ENCODE measurements at regions of chr2 and their contacts with region 1.

Region 1: GRCh38 chr2:226799181-226799975 is at the start of gene IRS1:
- DNase-seq: peak; percentile 74
- H3K4me3 Mint-ChIP-seq: peak within 1 kb of the TSS; percentile 80
- H3K27ac Mint-ChIP-seq: peak within 1 kb of the TSS; percentile 38
- H3K4me1 Mint-ChIP-seq: peaks cover 24% of the 10 kb centered on the region
- H3K27me3 Mint-ChIP-seq: peaks cover 13% of the 10 kb centered on the region
- total RNA-seq, gene IRS1: 2.0 to 2.1 TPM

Region 2: GRCh38 chr2:225668606-225669266 is 1130.6 kb before region 1 on chr2:
- CTCF ChIA-PET with region 1: interaction called, 11 read pairs
- POLR2A ChIA-PET with region 1: no interaction called
- intact Hi-C with region 1: loop called (anchors 1 kb)
- DNase-seq: no peak
- H3K4me3 Mint-ChIP-seq: no peak overlapping the region
- H3K27ac Mint-ChIP-seq: no peak overlapping the region
- H3K4me1 Mint-ChIP-seq: no peaks in the 10 kb centered on the region
- H3K27me3 Mint-ChIP-seq: peaks cover 2% of the 10 kb centered on the region

Region 3: GRCh38 chr2:226215902-226216503 is 583.4 kb before region 1 on chr2:
- CTCF ChIA-PET with region 1: interaction called, 53 read pairs
- POLR2A ChIA-PET with region 1: no interaction called
- intact Hi-C with region 1: loop called (anchors 1 kb)
- DNase-seq: peak; percentile 71
- H3K4me3 Mint-ChIP-seq: no peak overlapping the region
- H3K27ac Mint-ChIP-seq: no peak overlapping the region
- H3K4me1 Mint-ChIP-seq: no peaks in the 10 kb centered on the region
- H3K27me3 Mint-ChIP-seq: no peaks in the 10 kb centered on the region

Region 4: DNA sequence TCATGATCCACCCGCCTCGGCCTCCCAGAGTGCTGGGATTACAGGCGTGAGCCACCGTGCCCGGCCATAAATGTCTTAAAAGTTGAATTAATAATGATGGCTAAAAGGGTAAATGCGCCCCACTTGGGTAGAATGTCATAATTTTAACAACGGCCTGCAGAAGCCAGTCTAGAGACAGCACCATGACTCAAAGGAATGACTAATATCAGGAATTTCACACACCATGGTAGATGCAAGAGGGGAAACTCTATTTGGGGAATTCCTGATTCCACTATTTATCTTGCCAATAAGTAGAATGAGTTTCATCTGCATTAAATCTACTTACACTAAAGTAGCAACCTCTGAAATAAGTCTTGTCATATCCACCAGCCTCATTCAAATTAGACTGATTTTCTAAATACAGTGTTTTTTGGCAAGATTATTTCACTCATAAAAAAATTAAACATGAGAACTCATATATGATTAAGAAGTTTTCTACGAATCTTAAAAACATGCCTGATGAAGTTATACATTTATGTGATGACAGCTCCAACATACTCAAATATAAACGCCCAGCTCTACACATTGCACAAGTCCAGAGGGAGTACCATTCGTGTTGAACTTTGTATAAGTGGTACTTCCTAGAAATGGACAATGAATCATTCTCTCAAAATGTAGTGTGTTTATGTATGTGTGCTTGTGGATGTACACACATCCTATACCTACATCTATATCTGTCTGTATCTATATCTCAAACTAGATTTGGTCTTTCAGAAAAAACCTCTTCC is 309.4 kb before region 1 on chr2:
- CTCF ChIA-PET with region 1: no interaction called
- POLR2A ChIA-PET with region 1: no interaction called
- intact Hi-C with region 1: loop called (anchors 10 kb)
- DNase-seq: no peak
- H3K4me3 Mint-ChIP-seq: no peak overlapping the region
- H3K27ac Mint-ChIP-seq: no peak overlapping the region
- H3K4me1 Mint-ChIP-seq: peaks cover 8% of the 10 kb centered on the region
- H3K27me3 Mint-ChIP-seq: peaks cover 9% of the 10 kb centered on the region

Region 5: GRCh38 chr2:226649871-226650660 is 149.3 kb before region 1 on chr2:
- CTCF ChIA-PET with region 1: no interaction called
- POLR2A ChIA-PET with region 1: no interaction called
- intact Hi-C with region 1: no loop called
- DNase-seq: peak; percentile 66
- H3K4me3 Mint-ChIP-seq: no peak overlapping the region
- H3K27ac Mint-ChIP-seq: peak overlapping the region; percentile 39
- H3K4me1 Mint-ChIP-seq: peaks cover 29% of the 10 kb centered on the region
- H3K27me3 Mint-ChIP-seq: no peaks in the 10 kb centered on the region

Region 6: GRCh38 chr2:226813148-226813701 is 13.8 kb after region 1 on chr2:
- CTCF ChIA-PET with region 1: interaction called, 16 read pairs
- POLR2A ChIA-PET with region 1: no interaction called
- intact Hi-C with region 1: no loop called
- DNase-seq: no peak
- H3K4me3 Mint-ChIP-seq: no peak overlapping the region
- H3K27ac Mint-ChIP-seq: no peak overlapping the region
- H3K4me1 Mint-ChIP-seq: no peaks in the 10 kb centered on the region
- H3K27me3 Mint-ChIP-seq: peaks cover 17% of the 10 kb centered on the region

Region 7: DNA sequence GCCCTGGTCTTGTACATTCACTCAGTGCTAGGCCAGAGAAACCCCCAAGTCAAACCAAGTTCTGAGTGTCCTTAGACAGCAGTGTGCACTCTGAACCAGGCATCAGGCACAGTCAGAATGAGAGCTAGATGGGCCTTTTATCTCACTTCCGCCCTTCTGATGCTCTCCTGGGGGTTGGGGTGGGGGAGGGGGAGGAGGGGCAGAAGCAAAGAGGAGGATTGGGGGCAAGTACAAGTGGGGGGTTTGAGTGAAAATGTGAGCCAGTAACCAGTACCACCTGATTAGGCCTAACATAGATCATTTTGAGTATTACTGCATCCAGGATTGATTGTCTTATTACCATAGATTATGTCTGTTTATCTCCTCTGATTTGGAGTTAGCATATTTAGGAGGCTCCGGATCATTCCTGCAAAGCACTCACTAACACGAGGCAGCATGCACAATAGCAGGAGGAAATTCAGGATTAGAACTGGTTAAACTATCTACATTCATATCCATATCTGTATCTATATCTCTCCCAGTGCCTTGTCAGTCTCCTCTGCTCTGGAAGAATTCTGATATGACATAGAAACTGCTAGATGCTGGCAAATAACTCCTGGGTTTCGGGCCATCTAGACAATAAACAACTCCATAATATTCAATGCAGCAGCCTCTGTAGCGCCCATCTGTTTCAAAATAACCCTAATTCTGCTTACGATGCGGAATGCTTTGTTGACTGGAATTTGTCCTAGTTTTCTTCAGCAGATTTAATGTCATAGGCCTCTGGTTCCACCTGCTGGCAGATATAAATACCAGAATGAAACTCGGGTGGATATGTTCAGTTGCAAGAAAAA is 185.6 kb after region 1 on chr2:
- CTCF ChIA-PET with region 1: interaction called, 29 read pairs
- POLR2A ChIA-PET with region 1: no interaction called
- intact Hi-C with region 1: loop called (anchors 2 kb)
- DNase-seq: peak; percentile 31
- H3K4me3 Mint-ChIP-seq: no peak overlapping the region
- H3K27ac Mint-ChIP-seq: no peak overlapping the region
- H3K4me1 Mint-ChIP-seq: peaks cover 20% of the 10 kb centered on the region
- H3K27me3 Mint-ChIP-seq: no peaks in the 10 kb centered on the region

Region 8: DNA sequence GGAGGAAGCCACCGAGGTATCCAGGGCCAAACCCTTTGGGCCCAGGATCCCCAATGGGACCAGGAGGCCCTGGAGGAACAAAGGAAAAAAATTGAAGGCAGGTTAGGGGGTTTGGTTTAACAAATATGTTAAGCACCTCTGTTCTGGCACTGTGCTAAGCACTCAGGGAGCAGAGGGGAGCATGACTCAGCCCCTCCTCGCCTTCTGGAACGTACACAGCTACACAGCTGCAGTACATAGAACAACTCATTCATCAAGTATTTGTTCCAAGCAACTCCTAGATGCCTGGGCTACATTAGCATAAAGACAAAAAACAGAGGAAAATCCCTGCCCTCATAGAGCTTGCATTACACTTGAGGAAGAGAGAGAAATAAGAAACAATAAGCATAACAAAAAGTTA is 211.1 kb after region 1 on chr2:
- CTCF ChIA-PET with region 1: no interaction called
- POLR2A ChIA-PET with region 1: no interaction called
- intact Hi-C with region 1: no loop called
- DNase-seq: no peak
- H3K4me3 Mint-ChIP-seq: no peak overlapping the region
- H3K27ac Mint-ChIP-seq: no peak overlapping the region
- H3K4me1 Mint-ChIP-seq: no peaks in the 10 kb centered on the region
- H3K27me3 Mint-ChIP-seq: peaks cover 4% of the 10 kb centered on the region

Measured in activated CD4-positive, alpha-beta memory T cell treated with anti-CD3 and anti-CD28 coated beads for 36 hours (primary cell).